PC-3 (cell line): ENCODE measurements at regions of chr5 and their contacts with region 1.

Region 1: DNA sequence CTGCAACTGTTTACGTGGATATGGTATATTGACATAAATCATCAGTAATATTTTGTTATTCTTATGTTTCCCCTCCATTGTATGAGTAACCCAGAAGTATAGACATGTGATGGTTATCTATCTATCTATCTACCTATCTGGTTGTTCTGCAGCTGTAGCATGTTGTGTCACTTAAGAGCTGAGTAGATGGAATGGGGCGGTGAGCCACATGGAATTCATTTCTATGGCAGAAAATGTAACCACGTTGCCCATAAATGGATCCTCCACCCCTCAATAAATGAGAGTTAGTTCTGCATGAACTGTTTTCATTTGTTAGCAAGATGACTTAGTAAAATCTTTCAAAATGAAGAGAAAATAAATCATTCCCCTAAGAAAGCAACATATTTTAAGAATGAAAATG is 553.2 kb downstream of the MAT2B start:
- DNase-seq: no peak
- ATAC-seq: no peak
- H3K4me3 ChIP-seq: no peak overlapping the region
- H3K27ac ChIP-seq: no peak overlapping the region
- H3K4me1 ChIP-seq: no peaks in the 10 kb centered on the region
- H3K27me3 ChIP-seq: no peaks in the 10 kb centered on the region
- CTCF ChIP-seq: no peak

Region 2: GRCh38 chr5:164119806-164120447 is 61.3 kb after region 1 on chr5:
- CTCF ChIA-PET with region 1: no interaction called
- POLR2A ChIA-PET with region 1: no interaction called
- intact Hi-C with region 1: loop called (anchors 5 kb)
- DNase-seq: no peak
- ATAC-seq: no peak
- H3K4me3 ChIP-seq: no peak overlapping the region
- H3K27ac ChIP-seq: no peak overlapping the region
- H3K4me1 ChIP-seq: no peaks in the 10 kb centered on the region
- H3K27me3 ChIP-seq: no peaks in the 10 kb centered on the region
- CTCF ChIP-seq: no peak